OCI-LY7 (cell line): ENCODE measurements at regions of chr17 and their contacts with region 1.

Region 1: DNA sequence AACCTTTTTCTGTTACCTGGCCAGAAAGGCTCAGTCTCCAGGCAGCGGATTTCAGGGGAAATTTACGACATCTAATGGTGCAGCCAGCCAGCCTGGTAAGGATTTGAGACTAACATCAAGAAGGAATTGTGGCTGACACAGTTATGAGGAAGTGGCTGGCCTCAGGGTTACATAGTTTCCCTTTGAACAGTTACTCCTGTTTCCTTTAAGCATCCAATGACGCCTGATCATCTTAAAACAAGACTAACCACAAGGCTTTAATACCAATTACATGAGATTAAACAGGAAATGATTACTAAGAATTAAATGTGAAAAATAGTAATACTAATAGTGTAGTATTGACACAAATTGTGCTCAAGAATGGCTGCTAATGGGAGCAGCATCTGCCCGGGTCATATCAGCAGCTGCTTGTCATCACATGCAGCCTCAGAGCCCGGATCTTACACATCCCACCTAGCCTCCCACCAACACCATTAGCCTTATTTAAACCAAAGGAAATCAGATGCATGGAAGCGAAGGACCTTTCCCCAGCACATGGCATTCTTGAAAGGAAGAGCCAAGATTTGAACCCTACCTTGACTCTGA is 431.8 kb downstream of the PMP22 start:
- DNase-seq: no peak
- H3K4me3 ChIP-seq: no peak overlapping the region
- H3K27ac ChIP-seq: no peak overlapping the region
- H3K4me1 ChIP-seq: no peaks in the 10 kb centered on the region
- CTCF ChIP-seq: no peak

Region 2: GRCh38 chr17:14775731-14776492 is 57.4 kb before region 1 on chr17:
- CTCF ChIA-PET with region 1: no interaction called
- POLR2A ChIA-PET with region 1: no interaction called
- intact Hi-C with region 1: loop called (anchors 5 kb)
- DNase-seq: no peak
- H3K4me3 ChIP-seq: no peak overlapping the region
- H3K27ac ChIP-seq: no peak overlapping the region
- H3K4me1 ChIP-seq: peaks cover 7% of the 10 kb centered on the region
- CTCF ChIP-seq: no peak

Region 3: GRCh38 chr17:14926526-14927122 is 93.3 kb after region 1 on chr17:
- CTCF ChIA-PET with region 1: no interaction called
- POLR2A ChIA-PET with region 1: no interaction called
- intact Hi-C with region 1: no loop called
- DNase-seq: peak; percentile 81
- H3K4me3 ChIP-seq: no peak overlapping the region
- H3K27ac ChIP-seq: no peak overlapping the region
- H3K4me1 ChIP-seq: peaks cover 8% of the 10 kb centered on the region
- CTCF ChIP-seq: peak; percentile 95